Heart right ventricle (tissue), 16 donors: ENCODE measurements at regions of chr5 and their contacts with region 1.

Region 1: DNA sequence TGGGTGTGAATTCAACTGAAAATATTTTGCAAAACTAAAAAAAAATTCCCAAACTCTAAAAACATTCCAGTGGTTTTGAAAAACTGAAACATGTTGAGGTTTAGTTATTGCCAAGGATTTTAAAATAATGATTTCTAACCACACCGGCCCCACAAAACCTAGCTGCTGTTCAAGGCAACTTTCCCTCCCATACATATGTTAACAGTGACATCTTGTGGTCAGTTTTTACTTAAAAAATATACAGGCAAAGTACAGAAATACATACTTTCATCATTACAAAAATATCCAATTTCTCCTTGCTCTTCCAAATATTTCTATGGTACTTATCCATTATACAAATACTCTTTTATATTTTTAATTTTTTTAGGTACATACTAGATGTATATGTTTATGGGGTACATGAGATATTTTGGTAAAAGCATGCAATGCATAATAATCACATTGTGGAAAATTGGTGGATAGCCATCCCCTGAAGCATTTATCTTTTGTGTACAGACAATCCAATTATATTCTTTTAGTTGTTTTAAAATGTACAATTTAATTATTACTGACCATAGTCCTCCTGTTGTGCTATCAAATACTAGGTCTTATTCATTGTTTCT is 34.4 kb upstream of the MRPS30 start:
- DNase-seq: no peak
- ATAC-seq: no peak
- H3K4me3 ChIP-seq: no peak overlapping the region
- H3K27ac ChIP-seq: no peak overlapping the region
- H3K4me1 ChIP-seq: peaks cover 0 to 3% (median 0%) of the 10 kb centered on the region in 9 donors
- H3K27me3 ChIP-seq: no peaks in the 10 kb centered on the region
- CTCF ChIP-seq: peak in 8 of 9 donors; percentile 24 to 71 (median 58)

Region 2: DNA sequence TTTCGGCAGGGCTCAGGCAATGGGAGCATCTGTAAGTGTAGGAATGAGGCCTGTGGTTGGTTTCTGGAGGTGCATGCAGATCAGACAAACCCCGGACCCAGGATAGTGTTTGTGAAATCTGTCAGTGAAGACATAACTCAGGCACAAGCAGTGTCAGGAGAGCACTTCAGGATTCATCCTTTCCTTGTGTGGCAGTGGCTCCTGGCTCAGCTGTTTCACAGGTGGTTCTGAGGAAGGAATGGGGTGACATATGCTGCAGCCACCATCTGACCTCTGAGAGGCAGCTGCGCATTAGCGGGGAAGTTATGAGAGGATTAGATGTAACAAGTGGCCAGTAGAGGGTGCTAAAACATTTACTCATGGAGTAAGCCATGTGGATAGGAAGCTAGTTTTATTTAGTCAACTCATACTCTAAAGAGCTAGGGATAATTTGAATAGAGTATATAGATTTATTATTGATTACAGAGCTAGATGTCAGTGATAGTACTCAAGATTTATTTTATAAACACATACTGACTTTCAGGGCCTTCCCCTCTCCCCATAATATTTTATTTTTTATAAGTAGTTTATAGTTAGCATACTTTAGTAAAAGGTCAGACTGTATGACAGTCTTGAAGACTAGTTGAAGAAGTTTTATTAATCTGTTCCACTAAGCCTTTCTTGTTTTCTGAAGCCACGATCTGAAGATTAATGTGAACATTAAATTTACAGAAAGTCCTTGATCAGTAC is 1143.0 kb before region 1 on chr5:
- intact Hi-C with region 1: loop called in 2 of 10 experiments (anchors 2 to 10 kb)
- DNase-seq: peak; percentile 16 to 65
- ATAC-seq: peak; percentile 68 to 87 (median 81)
- H3K4me3 ChIP-seq: no peak overlapping the region
- H3K27ac ChIP-seq: peak overlapping the region in 3 of 10 donors; percentile 1 to 65 (median 4)
- H3K4me1 ChIP-seq: peaks cover 5 to 76% (median 41%) of the 10 kb centered on the region in 9 donors
- H3K27me3 ChIP-seq: no peaks in the 10 kb centered on the region
- CTCF ChIP-seq: peak; percentile 31 to 81 (median 69)

Region 3: GRCh38 chr5:43658509-43658908 is 1115.9 kb before region 1 on chr5:
- intact Hi-C with region 1: loop called in 1 of 10 experiments (anchors 10 kb)
- DNase-seq: no peak
- ATAC-seq: peak in 1 of 8 donors; percentile 13
- H3K4me3 ChIP-seq: no peak overlapping the region
- H3K27ac ChIP-seq: peak overlapping the region in 1 of 10 donors; percentile 15
- H3K4me1 ChIP-seq: peaks cover 0 to 6% (median 0%) of the 10 kb centered on the region in 9 donors
- H3K27me3 ChIP-seq: no peaks in the 10 kb centered on the region
- CTCF ChIP-seq: no peak

Region 4: GRCh38 chr5:43729846-43730478 is 1044.4 kb before region 1 on chr5:
- intact Hi-C with region 1: loop called in 6 of 10 experiments (anchors 5 to 10 kb)
- DNase-seq: no peak
- ATAC-seq: no peak
- H3K4me3 ChIP-seq: no peak overlapping the region
- H3K27ac ChIP-seq: no peak overlapping the region
- H3K4me1 ChIP-seq: no peaks in the 10 kb centered on the region
- H3K27me3 ChIP-seq: no peaks in the 10 kb centered on the region
- CTCF ChIP-seq: peak; percentile 31 to 80 (median 62)

Region 5: DNA sequence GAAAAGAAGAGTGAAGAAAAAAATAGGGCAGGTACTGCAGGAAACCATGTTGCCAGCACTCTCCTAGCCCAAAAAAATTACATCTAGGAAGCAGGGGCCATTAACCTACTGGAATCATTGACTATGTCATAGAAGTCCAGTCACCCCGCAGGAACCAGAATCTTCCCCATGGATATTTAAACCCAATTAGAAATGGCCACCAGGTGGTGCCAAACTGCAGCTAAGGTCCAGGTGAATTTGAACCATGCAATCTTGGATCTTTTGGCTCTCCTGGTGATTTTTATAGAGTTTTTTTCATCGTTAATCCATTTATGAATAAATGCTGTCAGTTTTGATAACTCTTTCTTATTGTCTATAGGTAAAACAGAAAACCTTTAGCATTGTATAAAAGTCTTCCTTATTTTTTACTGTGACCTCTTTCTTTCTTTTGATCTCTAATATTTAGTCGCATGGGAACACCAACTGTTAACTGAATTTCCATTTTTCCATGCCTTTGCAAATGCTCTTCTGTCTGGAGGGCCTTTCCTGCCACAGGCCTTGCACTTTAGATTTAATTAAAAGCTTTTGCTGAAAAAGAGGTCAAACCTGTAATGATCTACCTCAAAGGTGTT is 237.6 kb before region 1 on chr5:
- intact Hi-C with region 1: loop called (anchors 1 to 10 kb)
- DNase-seq: peak in 1 of 2 donors; percentile 18
- ATAC-seq: no peak
- H3K4me3 ChIP-seq: no peak overlapping the region
- H3K27ac ChIP-seq: no peak overlapping the region
- H3K4me1 ChIP-seq: no peaks in the 10 kb centered on the region
- H3K27me3 ChIP-seq: no peaks in the 10 kb centered on the region
- CTCF ChIP-seq: peak; percentile 17 to 74 (median 65)